ENCODE measurements at regions of chr13 and their contacts with region 1.

Region 1: DNA sequence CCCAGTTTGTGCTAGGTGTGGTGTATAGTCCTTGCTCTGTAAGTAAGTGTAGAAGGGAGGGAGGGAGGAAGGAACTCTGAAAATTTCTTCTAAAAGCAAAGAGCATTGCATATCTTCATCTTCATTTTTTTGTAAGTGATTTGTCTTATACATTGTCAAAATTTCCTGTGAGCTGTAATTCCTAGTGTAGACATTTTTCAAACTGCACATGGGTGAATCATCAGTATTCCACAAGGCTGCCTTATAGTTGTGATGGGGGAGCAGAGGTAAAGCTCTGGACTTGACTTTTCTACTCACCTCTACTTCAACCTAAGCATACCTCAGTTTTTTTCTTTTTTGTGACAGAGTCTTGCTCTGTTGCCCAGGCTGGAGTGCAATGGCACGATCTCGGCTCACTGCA is 86.9 kb downstream of the CDK8 start:
- DNase-seq: peak; percentile 46
- ATAC-seq: peak; percentile 77
- H3K4me3 ChIP-seq: no peak overlapping the region
- H3K27ac ChIP-seq: no peak overlapping the region
- H3K4me1 ChIP-seq: no peaks in the 10 kb centered on the region
- H3K27me3 ChIP-seq: no peaks in the 10 kb centered on the region
- CTCF ChIP-seq: no peak
- POLR2A ChIP-seq: no peak
- RAD21 ChIP-seq: no peak

Region 2: GRCh38 chr13:26266311-26266710 is 74.5 kb before region 1 on chr13:
- CTCF ChIA-PET with region 1: no interaction called
- POLR2A ChIA-PET with region 1: no interaction called
- dilution Hi-C with region 1: no loop called
- in situ Hi-C with region 1: no loop called
- intact Hi-C with region 1: loop called (anchors 10 kb)
- DNase-seq: no peak
- ATAC-seq: no peak
- H3K4me3 ChIP-seq: no peak overlapping the region
- H3K27ac ChIP-seq: no peak overlapping the region
- H3K4me1 ChIP-seq: no peaks in the 10 kb centered on the region
- H3K27me3 ChIP-seq: no peaks in the 10 kb centered on the region
- CTCF ChIP-seq: no peak
- POLR2A ChIP-seq: no peak
- RAD21 ChIP-seq: no peak

Region 3: GRCh38 chr13:26272621-26273020 is 68.2 kb before region 1 on chr13:
- CTCF ChIA-PET with region 1: no interaction called
- POLR2A ChIA-PET with region 1: interaction called, 11 read pairs
- dilution Hi-C with region 1: no loop called
- in situ Hi-C with region 1: no loop called
- intact Hi-C with region 1: loop called (anchors 10 kb)
- DNase-seq: no peak
- ATAC-seq: no peak
- H3K4me3 ChIP-seq: no peak overlapping the region
- H3K27ac ChIP-seq: no peak overlapping the region
- H3K4me1 ChIP-seq: no peaks in the 10 kb centered on the region
- H3K27me3 ChIP-seq: no peaks in the 10 kb centered on the region
- CTCF ChIP-seq: no peak
- POLR2A ChIP-seq: no peak
- RAD21 ChIP-seq: no peak

Measured in IMR-90 (cell line).